CD14-positive monocyte (primary cell): ENCODE measurements at regions of chr9 and their contacts with region 1.

Region 1: DNA sequence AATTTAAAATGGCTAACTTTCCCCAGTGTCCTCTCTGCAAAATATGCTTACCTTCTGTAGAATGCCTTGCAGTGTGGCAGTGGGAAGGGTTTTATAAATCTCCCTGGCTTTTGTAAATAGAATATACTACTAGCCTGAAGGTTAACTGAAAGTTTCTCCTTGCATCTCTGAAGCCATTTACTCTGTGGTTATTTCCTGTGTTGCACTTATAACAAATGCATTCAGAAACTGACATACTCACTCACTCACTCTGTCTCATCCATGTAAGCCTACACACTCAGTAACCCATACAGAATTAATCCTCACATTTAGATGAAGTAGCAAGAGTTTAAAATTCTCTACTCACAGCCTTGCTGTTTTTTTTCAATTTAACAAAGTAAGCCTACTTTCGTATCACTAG is 87.1 kb upstream of the SH3GL2 start:
- DNase-seq: no peak
- H3K4me3 ChIP-seq: no peak overlapping the region
- H3K4me3 Mint-ChIP-seq: no peak overlapping the region
- H3K27ac ChIP-seq: no peak overlapping the region
- H3K27ac Mint-ChIP-seq: no peak overlapping the region
- H3K4me1 ChIP-seq: no peaks in the 10 kb centered on the region
- H3K4me1 Mint-ChIP-seq: no peaks in the 10 kb centered on the region
- H3K27me3 ChIP-seq: no peaks in the 10 kb centered on the region
- H3K27me3 Mint-ChIP-seq: peaks cover 0 to 3% (median 0%) of the 10 kb centered on the region in 3 donors
- CTCF ChIP-seq: no peak

Region 2: GRCh38 chr9:17436854-17437253 is 54.9 kb before region 1 on chr9:
- intact Hi-C with region 1: loop called in 1 of 2 experiments (anchors 10 kb)
- DNase-seq: no peak
- H3K4me3 ChIP-seq: no peak overlapping the region
- H3K4me3 Mint-ChIP-seq: no peak overlapping the region
- H3K27ac ChIP-seq: no peak overlapping the region
- H3K27ac Mint-ChIP-seq: no peak overlapping the region
- H3K4me1 ChIP-seq: no peaks in the 10 kb centered on the region
- H3K4me1 Mint-ChIP-seq: no peaks in the 10 kb centered on the region
- H3K27me3 ChIP-seq: no peaks in the 10 kb centered on the region
- H3K27me3 Mint-ChIP-seq: no peaks in the 10 kb centered on the region
- CTCF ChIP-seq: no peak

Region 3: DNA sequence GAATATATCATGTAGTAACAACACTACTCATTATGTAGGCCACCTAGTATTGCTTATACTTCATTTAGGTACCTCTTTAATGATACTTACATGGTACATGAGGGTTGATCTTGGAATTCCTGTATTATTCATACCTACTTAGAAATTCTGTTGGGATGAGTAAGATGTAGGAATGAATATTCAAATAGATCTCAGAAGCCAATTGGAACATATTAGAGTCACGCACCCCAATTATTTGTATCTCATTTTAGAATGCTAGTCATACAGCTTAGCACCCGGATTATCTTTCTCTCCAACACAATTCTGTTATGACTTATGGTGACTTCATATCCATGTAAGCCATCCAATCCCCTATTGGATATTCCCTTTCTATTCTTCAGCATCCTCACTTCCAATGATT is 19.7 kb before region 1 on chr9:
- intact Hi-C with region 1: no loop called
- DNase-seq: no peak
- H3K4me3 ChIP-seq: no peak overlapping the region
- H3K4me3 Mint-ChIP-seq: no peak overlapping the region
- H3K27ac ChIP-seq: no peak overlapping the region
- H3K27ac Mint-ChIP-seq: no peak overlapping the region
- H3K4me1 ChIP-seq: no peaks in the 10 kb centered on the region
- H3K4me1 Mint-ChIP-seq: no peaks in the 10 kb centered on the region
- H3K27me3 ChIP-seq: no peaks in the 10 kb centered on the region
- H3K27me3 Mint-ChIP-seq: no peaks in the 10 kb centered on the region
- CTCF ChIP-seq: no peak